Mucosa of descending colon (tissue), 3 donors: ENCODE measurements at regions of chr2 and their contacts with region 1.

Region 1: DNA sequence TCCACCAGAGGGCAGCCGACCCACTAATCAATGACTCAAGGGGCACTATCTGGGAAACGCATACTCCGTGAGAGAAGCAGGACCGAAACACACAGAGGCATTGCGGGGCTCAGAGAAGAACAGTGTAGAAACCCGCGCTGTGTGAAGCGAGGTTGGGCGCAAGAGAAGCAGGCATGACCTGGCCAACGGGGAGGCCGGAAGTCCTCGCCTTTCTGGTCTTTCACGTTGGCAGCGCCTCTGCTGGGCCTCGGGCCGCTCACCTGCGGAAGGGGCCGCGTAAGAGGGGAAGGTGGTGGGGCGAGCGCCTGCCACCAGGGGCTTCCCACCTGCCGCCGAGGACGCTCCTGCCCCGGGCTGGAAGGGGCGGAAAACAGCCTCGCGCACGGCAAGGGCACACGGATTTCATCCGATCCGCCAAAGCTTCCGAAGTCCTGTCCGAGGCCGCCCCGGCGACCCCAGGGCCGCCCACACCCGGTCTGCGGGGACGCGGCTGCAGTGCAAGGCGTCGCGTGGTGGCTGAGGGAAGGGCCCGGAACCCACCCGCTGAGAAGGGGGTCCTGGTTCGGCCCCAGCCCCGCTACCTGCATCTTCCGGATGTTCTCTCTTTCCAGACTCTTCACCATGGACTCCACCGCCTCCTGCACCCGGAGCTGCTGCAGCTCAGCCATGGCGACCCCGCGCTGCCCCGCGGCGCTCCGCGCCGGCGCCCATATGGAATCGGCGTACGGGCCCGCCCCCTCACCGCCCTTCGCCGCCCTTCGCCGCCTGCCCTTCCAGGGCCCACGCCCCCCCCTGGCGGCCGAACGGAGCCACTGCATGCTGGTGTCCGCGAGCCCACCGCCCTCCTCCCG is at the start of gene FAM136A:
- DNase-seq: peak; percentile 83 to 93 (median 92)
- ATAC-seq: peak; percentile 99
- H3K4me3 ChIP-seq: peak within 1 kb of the TSS; percentile 90
- H3K4me1 ChIP-seq: peaks cover 6% of the 10 kb centered on the region
- CTCF ChIP-seq: peak; percentile 99
- total RNA-seq, gene FAM136A: 29.8 to 51.7 (median 33.5) TPM

Region 2: DNA sequence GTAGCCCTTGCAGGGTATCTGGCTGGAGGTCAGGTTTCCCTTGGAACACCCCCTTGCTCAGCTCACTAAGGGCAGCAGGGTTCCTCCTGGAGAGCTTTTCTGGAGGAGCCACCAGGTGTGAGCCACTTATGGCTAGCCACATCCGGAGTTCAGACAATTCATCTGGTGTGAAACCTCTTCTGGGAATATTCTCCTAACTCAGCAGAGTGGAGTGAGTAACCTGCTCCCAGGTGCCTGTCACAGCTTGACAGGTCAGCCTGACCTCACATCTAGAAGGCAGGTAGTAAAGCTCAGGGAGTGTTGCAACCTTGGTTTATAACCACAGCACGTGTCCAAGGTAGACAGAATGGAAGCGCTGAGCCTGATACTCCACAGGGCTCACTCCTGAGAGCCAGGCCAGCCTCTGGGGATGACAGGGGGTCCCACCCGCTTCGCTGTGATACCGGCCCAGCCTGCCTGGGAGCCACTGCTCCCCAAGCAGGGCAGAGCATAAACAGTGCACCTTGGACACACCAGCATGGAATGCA is 314.7 kb after region 1 on chr2:
- intact Hi-C with region 1: loop called (anchors 10 kb)
- DNase-seq: peak in 2 of 3 donors; percentile 40 to 56
- ATAC-seq: peak; percentile 95
- H3K4me3 ChIP-seq: no peak overlapping the region
- H3K4me1 ChIP-seq: peaks cover 3% of the 10 kb centered on the region
- CTCF ChIP-seq: no peak

Region 3: DNA sequence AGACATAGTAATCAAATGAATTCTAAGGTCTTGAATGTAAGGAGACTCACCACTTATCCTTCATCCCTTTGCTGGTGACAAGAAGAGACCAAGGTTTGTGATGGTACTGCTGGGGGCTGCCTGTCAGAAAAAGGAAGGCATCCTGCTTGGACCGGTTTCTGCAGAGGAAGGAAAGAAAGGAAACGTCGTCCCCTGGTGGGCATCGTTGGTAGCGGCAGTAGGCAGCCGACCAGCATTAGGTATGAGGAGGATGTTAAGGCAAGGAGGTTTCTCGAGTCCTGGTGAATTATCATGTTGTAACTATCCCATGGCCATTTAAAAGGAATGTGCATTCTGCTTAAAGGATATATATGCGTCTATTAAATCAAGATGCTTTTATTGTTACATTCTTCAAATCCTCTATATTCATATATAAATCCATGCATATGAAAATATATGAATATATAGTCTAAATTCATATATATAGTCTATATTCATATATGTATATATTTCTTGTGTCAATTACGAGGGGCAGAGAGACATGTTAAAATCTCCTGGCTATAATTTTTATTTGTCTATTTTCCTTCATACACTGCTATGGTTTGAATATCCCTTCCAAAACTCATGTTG is 346.4 kb after region 1 on chr2:
- intact Hi-C with region 1: loop called in 1 of 2 experiments (anchors 10 kb)
- DNase-seq: peak in 2 of 3 donors; percentile 77 to 85
- ATAC-seq: peak; percentile 79
- H3K4me3 ChIP-seq: no peak overlapping the region
- H3K4me1 ChIP-seq: no peaks in the 10 kb centered on the region
- CTCF ChIP-seq: peak; percentile 89